Common myeloid progenitor, CD34-positive (primary cell): ENCODE measurements at regions of chr3 and their contacts with region 1.

Region 1: DNA sequence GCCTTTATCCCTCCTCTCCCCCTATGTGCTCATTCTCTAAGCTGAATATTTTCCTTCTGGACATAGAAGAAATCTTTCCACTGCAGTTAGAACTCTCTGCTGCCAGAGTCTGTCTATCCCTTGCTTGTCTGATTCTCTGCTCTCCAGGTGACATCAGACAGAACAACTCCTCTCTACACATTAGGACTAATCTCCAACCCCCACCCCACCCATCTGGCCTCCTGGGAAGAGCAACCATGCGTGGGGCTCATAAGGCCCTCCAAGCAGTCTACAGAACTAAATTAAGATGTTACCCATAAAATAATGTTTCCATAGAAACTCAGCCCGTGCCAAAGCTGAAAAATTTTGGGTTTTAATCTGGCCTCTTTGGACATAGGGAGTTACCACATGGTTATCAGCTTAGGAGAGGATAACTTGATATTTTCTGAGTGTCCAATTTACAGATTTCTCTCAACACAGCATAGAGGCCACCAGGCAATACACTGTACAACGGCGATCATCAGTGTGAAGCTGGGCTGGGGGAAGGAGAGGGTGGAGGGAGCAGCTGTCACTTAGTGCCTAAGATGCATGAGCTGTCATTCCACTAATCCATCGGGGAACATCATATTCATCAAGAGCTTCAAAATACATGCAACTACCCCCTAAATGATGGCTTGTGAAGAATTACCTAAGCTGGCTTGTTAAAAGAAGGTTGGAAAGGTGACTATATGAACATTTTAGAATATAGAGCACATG is 199.4 kb downstream of the CLSTN2 start:
- DNase-seq: no peak
- H3K4me3 ChIP-seq: no peak overlapping the region
- H3K27ac ChIP-seq: no peak overlapping the region
- H3K4me1 ChIP-seq: peaks cover 0 to 5% (median 0%) of the 10 kb centered on the region in 4 experiments
- H3K27me3 ChIP-seq: peaks cover 0 to 3% (median 0%) of the 10 kb centered on the region in 5 experiments

Region 2: GRCh38 chr3:139893267-139893962 is 241.0 kb before region 1 on chr3:
- CTCF ChIA-PET with region 1: no interaction called
- POLR2A ChIA-PET with region 1: no interaction called
- DNase-seq: no peak
- H3K4me3 ChIP-seq: no peak overlapping the region
- H3K27ac ChIP-seq: no peak overlapping the region
- H3K4me1 ChIP-seq: no peaks in the 10 kb centered on the region
- H3K27me3 ChIP-seq: no peaks in the 10 kb centered on the region

Region 3: GRCh38 chr3:140152851-140153639 is 18.6 kb after region 1 on chr3:
- CTCF ChIA-PET with region 1: interaction called, 11 read pairs
- POLR2A ChIA-PET with region 1: no interaction called
- DNase-seq: no peak
- H3K4me3 ChIP-seq: no peak overlapping the region
- H3K27ac ChIP-seq: no peak overlapping the region
- H3K4me1 ChIP-seq: no peaks in the 10 kb centered on the region
- H3K27me3 ChIP-seq: no peaks in the 10 kb centered on the region